Dorsolateral prefrontal cortex (tissue), 120 donors: ENCODE measurements at regions of chr6 and their contacts with region 1.

Region 1: DNA sequence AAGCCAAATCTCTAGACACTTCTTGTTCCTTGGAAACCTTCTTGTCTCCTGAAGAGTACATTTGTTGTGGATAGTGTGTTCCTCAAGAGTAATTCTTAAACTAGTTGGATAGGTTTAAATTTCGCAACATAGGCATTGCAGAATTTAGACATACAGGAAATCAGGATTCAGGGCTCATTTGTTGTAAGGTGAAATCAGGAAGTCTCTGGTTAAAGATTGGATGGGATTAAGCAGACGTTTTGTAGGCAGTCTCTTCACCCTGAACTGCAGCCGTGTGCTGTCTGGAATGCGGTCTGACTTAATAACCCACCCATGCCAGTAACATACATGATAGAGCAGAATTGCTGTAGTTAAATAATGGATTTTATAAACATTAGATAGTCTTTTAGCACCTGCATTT is 21.7 kb downstream of the HIVEP1 start:
- DNase-seq: no peak
- H3K4me3 ChIP-seq: no peak overlapping the region
- H3K27ac ChIP-seq: no peak overlapping the region
- H3K27me3 ChIP-seq: no peaks in the 10 kb centered on the region
- CTCF ChIP-seq: no peak

Region 2: GRCh38 chr6:11653028-11653583 is 380.7 kb before region 1 on chr6:
- intact Hi-C with region 1: loop called in 1 of 2 experiments (anchors 10 kb)
- DNase-seq: peak in 1 of 10 donors; percentile 11
- H3K4me3 ChIP-seq: no peak overlapping the region
- H3K27ac ChIP-seq: peak overlapping the region in 3 of 59 donors; percentile 7 to 31 (median 20)
- H3K27me3 ChIP-seq: no peaks in the 10 kb centered on the region
- CTCF ChIP-seq: no peak